Caco-2 (cell line): ENCODE measurements at regions of chr4 and their contacts with region 1.

Region 1: DNA sequence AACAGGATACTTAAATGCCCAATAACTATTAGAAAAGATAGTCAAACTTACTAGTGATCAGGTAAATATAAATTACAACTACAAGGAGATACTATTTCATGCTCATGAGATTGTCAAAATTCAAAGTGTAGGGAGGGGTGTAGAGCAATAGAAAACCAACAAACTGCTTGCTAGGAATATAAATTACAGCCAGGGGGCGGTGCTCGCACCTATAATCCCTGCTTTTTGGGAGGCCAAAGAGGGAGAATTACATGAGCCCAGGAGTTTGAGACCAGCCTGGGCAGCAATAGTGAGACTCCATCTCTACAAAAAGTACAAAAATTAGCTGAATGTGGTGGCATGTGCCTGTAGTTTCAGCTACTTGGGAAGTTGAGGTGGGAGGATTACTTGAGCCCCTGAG is 556.5 kb upstream of the NR3C2 start:
- DNase-seq: peak in 1 of 2 experiments; percentile 17
- H3K4me3 ChIP-seq: no peak overlapping the region
- H3K4me3 Mint-ChIP-seq: no peak overlapping the region
- H3K27ac Mint-ChIP-seq: no peak overlapping the region
- H3K4me1 ChIP-seq: no peaks in the 10 kb centered on the region
- H3K4me1 Mint-ChIP-seq: no peaks in the 10 kb centered on the region
- H3K27me3 ChIP-seq: no peaks in the 10 kb centered on the region
- H3K27me3 Mint-ChIP-seq: peaks cover 6% of the 10 kb centered on the region
- CTCF ChIP-seq: peak; percentile 21 to 26

Region 2: GRCh38 chr4:149264093-149264733 is 265.5 kb after region 1 on chr4:
- CTCF ChIA-PET with region 1: no interaction called
- POLR2A ChIA-PET with region 1: no interaction called
- intact Hi-C with region 1: loop called (anchors 1 kb)
- DNase-seq: peak; percentile 49 to 50
- H3K4me3 ChIP-seq: no peak overlapping the region
- H3K4me3 Mint-ChIP-seq: no peak overlapping the region
- H3K27ac Mint-ChIP-seq: no peak overlapping the region
- H3K4me1 ChIP-seq: no peaks in the 10 kb centered on the region
- H3K4me1 Mint-ChIP-seq: no peaks in the 10 kb centered on the region
- H3K27me3 ChIP-seq: no peaks in the 10 kb centered on the region
- H3K27me3 Mint-ChIP-seq: no peaks in the 10 kb centered on the region
- CTCF ChIP-seq: peak; percentile 67 to 68